Activated naive CD4-positive, alpha-beta T cell treated with anti-CD3 and anti-CD28 coated beads for 36 hours (primary cell): ENCODE measurements at regions of chr6 and their contacts with region 1.

Region 1: GRCh38 chr6:89610149-89610642 is 28.4 kb downstream of the LYRM2 start:
- DNase-seq: peak; percentile 84
- H3K4me3 Mint-ChIP-seq: no peak overlapping the region
- H3K27ac Mint-ChIP-seq: no peak overlapping the region
- H3K4me1 Mint-ChIP-seq: no peaks in the 10 kb centered on the region
- H3K27me3 Mint-ChIP-seq: no peaks in the 10 kb centered on the region

Region 2: GRCh38 chr6:89122625-89123024 is 487.6 kb before region 1 on chr6:
- CTCF ChIA-PET with region 1: no interaction called
- intact Hi-C with region 1: loop called (anchors 10 kb)
- DNase-seq: peak; percentile 21
- H3K4me3 Mint-ChIP-seq: no peak overlapping the region
- H3K27ac Mint-ChIP-seq: no peak overlapping the region
- H3K4me1 Mint-ChIP-seq: no peaks in the 10 kb centered on the region
- H3K27me3 Mint-ChIP-seq: no peaks in the 10 kb centered on the region

Region 3: GRCh38 chr6:89432875-89433251 is 177.3 kb before region 1 on chr6 and contains the start of gene ANKRD6:
- CTCF ChIA-PET with region 1: interaction called, 43 read pairs
- intact Hi-C with region 1: loop called (anchors 1 kb)
- DNase-seq: peak; percentile 77
- H3K4me3 Mint-ChIP-seq: peak within 1 kb of the TSS; percentile 69
- H3K27ac Mint-ChIP-seq: no peak within 1 kb of the TSS
- H3K4me1 Mint-ChIP-seq: peaks cover 10% of the 10 kb centered on the region
- H3K27me3 Mint-ChIP-seq: no peaks in the 10 kb centered on the region
- total RNA-seq, gene ANKRD6: 1.5 to 1.6 TPM

Region 4: DNA sequence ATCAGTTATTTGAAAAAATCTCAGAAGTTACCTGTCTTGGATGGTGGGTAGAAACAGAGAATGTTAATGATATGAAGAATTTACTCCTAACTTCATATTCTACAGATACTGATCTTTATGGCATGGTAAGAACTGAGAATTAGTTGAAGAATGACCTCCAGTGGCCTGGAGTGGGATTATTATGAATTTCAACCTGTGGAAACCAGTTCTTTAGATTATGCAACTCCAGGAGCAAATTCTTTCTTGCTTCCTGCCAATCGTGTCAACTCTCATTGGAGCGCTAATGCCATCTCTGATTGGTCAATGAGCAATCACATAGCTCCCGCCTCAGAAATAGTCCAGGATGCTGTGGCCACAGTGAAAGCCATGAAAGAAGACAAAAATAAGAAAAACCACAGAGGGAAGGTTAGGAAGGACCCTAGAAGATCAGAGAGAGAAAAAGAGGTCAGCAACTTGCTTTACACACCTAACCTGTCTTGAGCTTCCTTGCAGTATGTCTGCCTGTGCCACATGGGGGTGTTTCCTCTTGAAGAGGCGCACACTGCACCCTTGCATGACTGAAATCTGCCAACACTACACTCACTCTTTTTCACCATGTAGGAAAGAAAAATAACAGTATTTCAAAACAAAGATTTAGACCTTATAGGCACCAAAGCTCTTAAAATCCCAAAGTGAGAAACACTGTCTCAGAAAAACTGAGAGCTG is 12.1 kb before region 1 on chr6:
- CTCF ChIA-PET with region 1: interaction called, 34 read pairs
- intact Hi-C with region 1: no loop called
- DNase-seq: peak; percentile 7
- H3K4me3 Mint-ChIP-seq: no peak overlapping the region
- H3K27ac Mint-ChIP-seq: no peak overlapping the region
- H3K4me1 Mint-ChIP-seq: peaks cover 18% of the 10 kb centered on the region
- H3K27me3 Mint-ChIP-seq: no peaks in the 10 kb centered on the region

Region 5: DNA sequence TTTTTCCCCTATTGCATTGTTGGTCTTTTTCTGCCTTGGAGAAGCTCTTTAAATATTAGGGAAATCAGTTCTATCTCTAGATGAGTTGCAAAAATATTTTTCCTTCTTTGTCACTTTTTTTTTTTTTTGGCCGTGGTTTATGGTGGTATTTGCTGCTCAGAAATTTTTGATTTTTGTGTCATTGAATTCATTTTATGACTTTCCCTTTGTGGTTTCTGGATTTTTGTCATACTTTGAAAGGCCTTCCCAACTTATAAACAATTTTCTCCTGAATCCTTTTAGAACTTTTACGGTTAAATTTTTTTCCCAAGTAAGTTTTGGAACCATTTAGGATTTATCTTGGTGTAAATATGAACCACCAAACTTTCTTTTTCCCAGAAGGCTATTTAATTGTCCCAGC is 429.7 kb after region 1 on chr6:
- CTCF ChIA-PET with region 1: no interaction called
- intact Hi-C with region 1: no loop called
- DNase-seq: no peak
- H3K4me3 Mint-ChIP-seq: no peak overlapping the region
- H3K27ac Mint-ChIP-seq: peak overlapping the region; percentile 31
- H3K4me1 Mint-ChIP-seq: peaks cover 51% of the 10 kb centered on the region
- H3K27me3 Mint-ChIP-seq: no peaks in the 10 kb centered on the region